MCF 10A (cell line): ENCODE measurements at regions of chr17 and their contacts with region 1.

Region 1: DNA sequence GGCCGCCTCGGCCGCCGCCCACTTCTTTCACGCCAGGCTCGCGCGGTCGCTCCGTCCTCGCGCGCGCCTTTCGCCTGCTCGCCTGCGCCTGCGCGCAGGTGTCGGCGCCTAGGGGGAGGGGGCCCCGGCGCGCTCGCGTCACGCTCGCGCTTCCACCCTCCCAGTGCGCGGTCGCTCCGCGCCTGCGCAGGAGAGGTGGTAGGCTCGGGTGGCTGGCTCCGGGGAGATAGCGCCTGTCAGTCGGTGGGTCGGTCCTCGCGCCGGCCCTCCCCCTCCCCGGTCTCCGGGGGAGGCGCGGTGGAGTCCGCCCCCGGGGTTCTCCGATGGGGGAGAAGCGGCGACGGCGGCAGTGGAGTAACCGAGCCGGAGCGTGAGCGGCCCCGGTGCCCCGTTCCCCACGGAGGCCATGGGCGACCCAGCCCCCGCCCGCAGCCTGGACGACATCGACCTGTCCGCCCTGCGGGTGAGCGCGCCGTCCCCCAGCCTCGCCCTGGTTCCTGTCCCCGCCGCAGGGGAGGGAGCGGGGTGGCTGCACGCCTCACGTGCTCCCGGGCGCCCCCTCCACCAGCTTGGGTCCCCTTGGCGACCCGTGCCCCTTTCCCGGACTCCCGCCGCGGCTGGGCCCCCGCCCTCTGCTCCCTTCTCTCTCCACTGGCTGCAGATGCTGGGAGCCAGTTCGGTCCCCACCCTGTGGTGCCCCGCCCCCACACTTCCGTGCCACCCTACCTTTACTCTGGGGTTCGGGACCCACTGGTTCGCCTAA is at the start of gene MINK1:
- DNase-seq: peak; percentile 92
- H3K4me3 Mint-ChIP-seq: peak within 1 kb of the TSS; percentile 94
- H3K27ac Mint-ChIP-seq: peak within 1 kb of the TSS; percentile 90
- H3K4me1 Mint-ChIP-seq: peaks cover 32% of the 10 kb centered on the region
- H3K27me3 Mint-ChIP-seq: no peaks in the 10 kb centered on the region
- CTCF ChIP-seq: no peak
- total RNA-seq, gene MINK1: 106 and 124 TPM in 2 replicates

Region 2: DNA sequence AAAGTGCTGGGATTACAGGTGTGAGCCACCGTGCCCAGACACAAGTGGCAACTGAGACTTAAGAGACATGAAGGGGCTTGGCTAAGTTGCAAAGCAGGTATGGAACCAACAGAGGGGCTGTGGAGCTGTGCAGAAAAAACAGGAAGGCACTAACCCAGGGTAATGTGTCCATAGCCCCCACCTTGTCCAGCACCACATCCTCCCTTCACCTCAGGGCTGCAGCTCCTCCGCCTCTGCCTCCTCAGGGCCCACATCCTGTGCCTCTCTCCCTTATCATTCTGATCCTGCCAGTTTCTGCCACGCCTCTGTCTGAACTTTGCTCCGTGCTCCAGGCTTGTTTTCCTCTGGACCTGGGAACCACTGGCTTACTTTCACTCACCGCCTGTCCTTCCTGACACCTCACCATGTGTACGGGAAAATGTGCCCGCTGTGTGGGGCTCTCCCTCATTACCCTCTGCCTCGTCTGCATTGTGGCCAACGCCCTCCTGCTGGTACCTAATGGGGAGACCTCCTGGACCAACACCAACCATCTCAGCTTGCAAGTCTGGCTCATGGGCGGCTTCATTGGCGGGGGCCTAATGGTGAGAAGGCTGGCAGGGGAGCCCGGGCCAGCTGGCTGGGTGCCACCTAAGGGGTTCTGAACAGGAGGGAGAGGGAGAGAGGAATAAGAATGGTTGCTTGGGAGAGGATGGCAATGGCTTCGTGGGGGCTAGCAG is 61.7 kb before region 1 on chr17 and contains the start of gene TM4SF5:
- CTCF ChIA-PET with region 1: no interaction called
- POLR2A ChIA-PET with region 1: no interaction called
- intact Hi-C with region 1: no loop called
- DNase-seq: no peak
- H3K4me3 Mint-ChIP-seq: no peak within 1 kb of the TSS
- H3K27ac Mint-ChIP-seq: no peak within 1 kb of the TSS
- H3K4me1 Mint-ChIP-seq: peaks cover 3% of the 10 kb centered on the region
- H3K27me3 Mint-ChIP-seq: peaks cover 22% of the 10 kb centered on the region
- CTCF ChIP-seq: no peak
- total RNA-seq, gene TM4SF5: not detected in 2 replicates

Region 3: GRCh38 chr17:4796553-4796921 is 36.8 kb before region 1 on chr17:
- CTCF ChIA-PET with region 1: no interaction called
- POLR2A ChIA-PET with region 1: interaction called, 11 read pairs
- intact Hi-C with region 1: no loop called
- DNase-seq: peak; percentile 20
- H3K4me3 Mint-ChIP-seq: peak overlapping the region; percentile 96
- H3K27ac Mint-ChIP-seq: peak overlapping the region; percentile 88
- H3K4me1 Mint-ChIP-seq: peaks cover 4% of the 10 kb centered on the region
- H3K27me3 Mint-ChIP-seq: no peaks in the 10 kb centered on the region
- CTCF ChIP-seq: no peak

Region 4: GRCh38 chr17:4806777-4807604 is 26.4 kb before region 1 on chr17 and contains the start of gene PLD2:
- CTCF ChIA-PET with region 1: interaction called, 3 read pairs
- POLR2A ChIA-PET with region 1: interaction called, 11 read pairs
- intact Hi-C with region 1: no loop called
- DNase-seq: peak; percentile 83
- H3K4me3 Mint-ChIP-seq: peak within 1 kb of the TSS; percentile 77
- H3K27ac Mint-ChIP-seq: no peak within 1 kb of the TSS
- H3K4me1 Mint-ChIP-seq: peaks cover 17% of the 10 kb centered on the region
- H3K27me3 Mint-ChIP-seq: no peaks in the 10 kb centered on the region
- CTCF ChIP-seq: no peak
- total RNA-seq, gene PLD2: 27.6 and 31.7 TPM in 2 replicates

Region 5: GRCh38 chr17:4852567-4853207 is 19.3 kb after region 1 on chr17:
- CTCF ChIA-PET with region 1: interaction called, 3 read pairs
- POLR2A ChIA-PET with region 1: interaction called, 211 read pairs
- intact Hi-C with region 1: loop called (anchors 2 kb)
- DNase-seq: peak; percentile 63
- H3K4me3 Mint-ChIP-seq: peak overlapping the region; percentile 2
- H3K27ac Mint-ChIP-seq: peak overlapping the region; percentile 89
- H3K4me1 Mint-ChIP-seq: peaks cover 75% of the 10 kb centered on the region
- H3K27me3 Mint-ChIP-seq: no peaks in the 10 kb centered on the region
- CTCF ChIP-seq: no peak

Region 6: GRCh38 chr17:4858882-4859260 is 25.5 kb after region 1 on chr17:
- CTCF ChIA-PET with region 1: interaction called, 4 read pairs
- POLR2A ChIA-PET with region 1: interaction called, 211 read pairs
- intact Hi-C with region 1: no loop called
- DNase-seq: peak; percentile 91
- H3K4me3 Mint-ChIP-seq: peak overlapping the region; percentile 83
- H3K27ac Mint-ChIP-seq: peak overlapping the region; percentile 89
- H3K4me1 Mint-ChIP-seq: peaks cover 55% of the 10 kb centered on the region
- H3K27me3 Mint-ChIP-seq: no peaks in the 10 kb centered on the region
- CTCF ChIP-seq: no peak

Region 7: DNA sequence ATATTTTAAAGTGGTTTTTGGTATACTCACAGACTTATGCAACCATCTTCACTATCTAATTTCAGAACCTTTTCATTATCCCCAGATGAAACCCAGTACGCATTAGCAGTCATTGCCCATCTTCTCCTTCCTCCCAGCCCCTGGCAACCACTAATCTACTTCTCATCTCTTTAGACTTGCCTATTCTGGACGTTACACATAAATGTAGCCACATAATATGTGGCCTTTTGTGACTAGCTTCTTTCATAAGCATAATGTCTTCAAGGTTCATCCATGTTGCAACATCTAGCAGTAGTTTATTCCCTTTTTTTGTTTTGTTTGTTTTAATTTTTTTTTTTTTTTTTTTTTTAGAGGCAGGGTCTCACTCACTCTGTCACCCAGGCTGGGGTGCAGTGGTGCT is 37.5 kb after region 1 on chr17:
- CTCF ChIA-PET with region 1: no interaction called
- POLR2A ChIA-PET with region 1: interaction called, 13 read pairs
- intact Hi-C with region 1: no loop called
- DNase-seq: no peak
- H3K4me3 Mint-ChIP-seq: no peak overlapping the region
- H3K27ac Mint-ChIP-seq: peak overlapping the region; percentile 56
- H3K4me1 Mint-ChIP-seq: peaks cover 20% of the 10 kb centered on the region
- H3K27me3 Mint-ChIP-seq: no peaks in the 10 kb centered on the region
- CTCF ChIP-seq: no peak

Region 8: DNA sequence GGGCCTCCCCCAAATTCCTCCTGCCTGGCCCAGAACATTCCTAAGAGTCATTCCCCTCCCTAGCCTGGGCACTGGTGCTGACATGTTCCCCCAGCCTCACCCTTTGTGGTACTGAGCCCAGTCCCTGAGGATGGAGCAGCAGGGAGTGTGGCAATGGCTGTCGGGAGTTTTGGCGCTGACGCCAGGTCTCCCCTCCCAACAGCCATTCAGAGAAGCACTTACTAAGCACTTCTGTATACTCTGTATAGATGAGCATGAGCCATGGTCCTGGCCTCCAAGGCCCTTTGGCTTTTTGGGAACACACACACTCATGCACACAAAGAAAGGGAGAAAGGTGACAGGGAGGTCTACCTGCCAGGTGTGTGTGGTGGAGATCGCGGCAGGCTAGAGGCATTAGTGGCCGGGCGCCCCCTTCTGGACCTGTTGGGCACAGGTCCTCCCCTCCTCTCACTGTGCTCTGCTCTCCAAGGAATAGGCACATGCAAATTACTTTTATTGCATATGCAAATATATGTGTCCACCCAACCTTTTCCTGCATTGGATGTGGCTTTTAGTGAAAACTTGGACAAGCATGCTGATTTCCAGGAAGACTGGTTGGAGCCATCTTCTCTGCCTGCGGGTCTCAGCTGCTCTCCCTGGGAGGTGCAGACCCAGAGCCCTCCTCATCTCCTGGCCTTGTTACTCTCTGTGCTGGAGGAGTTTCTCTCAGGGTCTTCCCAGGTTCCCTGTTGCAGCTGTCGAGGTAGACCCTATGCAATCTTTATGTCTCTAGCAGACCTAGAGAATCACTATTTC is 48.6 kb after region 1 on chr17:
- CTCF ChIA-PET with region 1: interaction called, 3 read pairs
- POLR2A ChIA-PET with region 1: interaction called, 12 read pairs
- intact Hi-C with region 1: loop called (anchors 2 kb)
- DNase-seq: peak; percentile 78
- H3K4me3 Mint-ChIP-seq: no peak overlapping the region
- H3K27ac Mint-ChIP-seq: no peak overlapping the region
- H3K4me1 Mint-ChIP-seq: peaks cover 6% of the 10 kb centered on the region
- H3K27me3 Mint-ChIP-seq: no peaks in the 10 kb centered on the region
- CTCF ChIP-seq: peak; percentile 80